Activated naive CD8-positive, alpha-beta T cell treated with anti-CD3 and anti-CD28 coated beads, Interleukin-2, amount 10 ng/mL, durations not matched to agents 7 days and 5 days (primary cell): ENCODE measurements at regions of chr3 and their contacts with region 1.

Region 1: GRCh38 chr3:4493014-4493940 is at the start of gene ITPR1:
- DNase-seq: peak; percentile 94
- ATAC-seq: peak; percentile 92
- H3K4me3 Mint-ChIP-seq: peak within 1 kb of the TSS; percentile 91
- H3K27ac Mint-ChIP-seq: peak within 1 kb of the TSS; percentile 88
- H3K4me1 Mint-ChIP-seq: peaks cover 30% of the 10 kb centered on the region
- H3K27me3 Mint-ChIP-seq: peaks cover 20% of the 10 kb centered on the region
- total RNA-seq, gene ITPR1: 74.3 to 76.2 TPM

Region 2: GRCh38 chr3:4350789-4351163 is 142.5 kb before region 1 on chr3:
- POLR2A ChIA-PET with region 1: interaction called, 25 read pairs
- DNase-seq: no peak
- ATAC-seq: peak; percentile 81
- H3K4me3 Mint-ChIP-seq: peak overlapping the region; percentile 60
- H3K27ac Mint-ChIP-seq: peak overlapping the region; percentile 13
- H3K4me1 Mint-ChIP-seq: peaks cover 27% of the 10 kb centered on the region
- H3K27me3 Mint-ChIP-seq: no peaks in the 10 kb centered on the region

Region 3: DNA sequence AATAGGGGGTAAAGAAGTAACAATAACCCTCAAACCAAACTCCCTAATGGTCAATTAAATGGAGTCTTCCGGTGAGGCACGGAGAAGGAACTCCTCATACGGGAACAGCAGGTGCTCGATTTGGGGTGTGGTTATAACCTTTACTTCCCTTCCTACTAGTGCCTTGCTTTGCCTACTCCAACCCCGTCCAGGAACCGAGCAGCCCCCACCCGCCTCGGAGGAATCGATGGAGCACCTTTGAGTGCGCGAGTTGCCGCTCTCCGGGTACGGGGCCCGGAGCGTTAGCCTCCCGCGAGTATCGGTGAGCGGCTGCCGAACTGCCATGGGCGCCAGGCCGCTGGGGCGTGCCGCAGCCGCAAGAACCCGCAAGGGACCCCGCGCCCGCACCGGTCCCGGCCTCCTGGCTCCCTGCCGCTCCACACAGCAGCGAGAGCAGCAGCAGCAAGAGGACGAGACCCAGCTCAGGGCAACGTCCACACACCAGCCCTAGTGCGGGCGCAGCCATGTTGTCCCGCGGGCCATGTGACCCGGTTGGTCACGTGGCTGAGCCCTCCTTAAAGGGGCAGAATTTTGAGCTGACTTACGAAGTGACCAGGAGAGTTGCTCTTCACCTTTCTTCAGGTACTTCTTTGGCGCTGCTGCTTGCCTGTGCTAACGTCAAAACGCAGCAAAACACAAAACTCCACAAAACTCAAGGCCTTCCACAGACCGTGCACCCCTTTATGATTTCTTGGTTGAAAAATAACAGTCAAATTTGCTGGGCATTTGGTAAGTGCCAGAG is 26.3 kb before region 1 on chr3 and contains the start of gene SUMF1:
- POLR2A ChIA-PET with region 1: interaction called, 30 read pairs
- DNase-seq: peak; percentile 83
- ATAC-seq: peak; percentile 97
- H3K4me3 Mint-ChIP-seq: peak within 1 kb of the TSS; percentile 93
- H3K27ac Mint-ChIP-seq: peak within 1 kb of the TSS; percentile 92
- H3K4me1 Mint-ChIP-seq: peaks cover 13% of the 10 kb centered on the region
- H3K27me3 Mint-ChIP-seq: peaks cover 4% of the 10 kb centered on the region
- total RNA-seq, gene SUMF1: 9.1 to 13.7 TPM

Region 4: GRCh38 chr3:4504340-4505261 is 11.3 kb after region 1 on chr3:
- POLR2A ChIA-PET with region 1: interaction called, 87 read pairs
- DNase-seq: peak; percentile 37
- ATAC-seq: peak; percentile 81
- H3K4me3 Mint-ChIP-seq: peak overlapping the region; percentile 89
- H3K27ac Mint-ChIP-seq: peak overlapping the region; percentile 97
- H3K4me1 Mint-ChIP-seq: peaks cover 45% of the 10 kb centered on the region
- H3K27me3 Mint-ChIP-seq: no peaks in the 10 kb centered on the region

Region 5: DNA sequence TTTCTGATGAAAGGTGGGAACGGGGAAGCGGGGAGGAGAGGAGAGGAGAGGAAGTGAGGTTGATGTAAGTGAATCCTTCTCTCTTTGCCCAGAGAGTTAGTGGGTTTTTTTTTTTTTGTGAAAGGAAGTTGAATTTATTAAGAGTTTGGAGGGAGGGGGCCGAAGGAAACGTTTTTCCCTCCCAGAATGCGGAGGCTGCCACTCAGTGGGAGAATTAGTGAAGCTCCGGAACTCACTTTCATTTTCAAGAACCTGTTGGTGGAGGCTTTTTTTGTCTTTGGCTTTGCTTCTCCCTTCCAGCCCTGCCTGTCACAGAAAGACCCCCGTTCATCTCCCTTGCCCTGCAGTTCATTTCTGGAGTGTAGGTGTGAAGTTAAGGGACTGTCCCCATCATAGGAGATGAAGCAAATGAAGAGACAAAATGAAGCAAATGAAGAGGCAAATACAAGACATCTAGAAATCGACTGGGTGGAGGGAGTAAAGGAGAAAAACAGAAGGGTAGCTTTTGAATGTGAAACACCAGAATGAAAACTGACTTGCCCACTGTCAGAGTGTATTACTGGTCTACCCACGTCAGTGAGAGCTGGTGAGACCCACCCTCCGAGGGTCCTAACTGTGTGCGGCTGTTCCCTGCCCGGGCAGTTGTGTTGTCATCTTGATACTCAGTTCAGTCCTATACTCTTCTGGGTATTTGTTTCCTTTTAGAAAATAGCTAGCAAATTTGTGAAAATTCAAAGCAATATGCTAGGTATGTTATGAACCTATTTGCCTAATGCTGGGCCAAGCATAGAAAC is 91.4 kb after region 1 on chr3:
- POLR2A ChIA-PET with region 1: interaction called, 10 read pairs
- DNase-seq: no peak
- ATAC-seq: peak; percentile 51
- H3K4me3 Mint-ChIP-seq: peak overlapping the region; percentile 88
- H3K27ac Mint-ChIP-seq: peak overlapping the region; percentile 91
- H3K4me1 Mint-ChIP-seq: peaks cover 37% of the 10 kb centered on the region
- H3K27me3 Mint-ChIP-seq: no peaks in the 10 kb centered on the region